Activated CD4-positive, alpha-beta T cell treated with anti-CD3 and anti-CD28 coated beads for 36 hours (primary cell): ENCODE measurements at regions of chr12 and their contacts with region 1.

Region 1: GRCh38 chr12:9750276-9751203 is 10.2 kb downstream of the CD69 start:
- DNase-seq: peak; percentile 72
- ATAC-seq: peak; percentile 62
- H3K4me3 Mint-ChIP-seq: peak overlapping the region; percentile 53
- H3K27ac Mint-ChIP-seq: peak overlapping the region; percentile 51
- H3K4me1 Mint-ChIP-seq: peaks cover 46% of the 10 kb centered on the region
- H3K27me3 Mint-ChIP-seq: no peaks in the 10 kb centered on the region

Region 2: GRCh38 chr12:9782547-9783382 is 32.2 kb after region 1 on chr12:
- CTCF ChIA-PET with region 1: interaction called, 15 read pairs
- POLR2A ChIA-PET with region 1: no interaction called
- intact Hi-C with region 1: no loop called
- DNase-seq: no peak
- ATAC-seq: no peak
- H3K4me3 Mint-ChIP-seq: no peak overlapping the region
- H3K27ac Mint-ChIP-seq: peak overlapping the region; percentile 43
- H3K4me1 Mint-ChIP-seq: peaks cover 56% of the 10 kb centered on the region
- H3K27me3 Mint-ChIP-seq: no peaks in the 10 kb centered on the region

Region 3: DNA sequence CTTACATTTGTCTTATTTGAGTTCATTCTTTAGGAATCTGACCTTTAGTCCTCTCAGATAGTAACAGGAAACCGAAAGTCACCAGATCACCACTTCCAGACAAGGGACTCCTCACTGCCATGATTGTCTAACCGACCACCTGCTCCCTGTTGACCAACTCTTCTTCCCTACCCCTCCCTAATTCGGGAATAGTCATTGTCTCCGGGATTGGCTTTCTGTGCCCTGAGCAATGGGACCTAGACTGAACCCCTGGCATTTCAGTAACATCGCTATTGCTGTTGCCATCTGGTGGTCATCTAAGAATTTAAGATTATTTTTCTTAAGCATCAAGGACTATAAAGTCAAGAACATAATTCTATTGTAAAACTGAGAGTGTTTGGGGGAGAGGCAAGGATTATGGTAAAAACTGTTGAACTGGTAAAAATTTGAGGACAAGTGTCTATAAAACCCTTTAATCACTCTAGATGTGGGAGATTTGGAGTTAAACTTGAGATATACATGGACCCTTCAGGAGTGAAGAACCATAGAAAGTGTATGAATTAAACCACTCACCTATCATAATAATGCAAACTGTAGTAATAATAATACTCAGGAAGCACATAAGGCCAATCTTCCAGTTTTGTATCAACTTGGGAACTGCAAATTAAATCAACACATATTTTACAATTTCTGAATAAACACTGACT is 175.3 kb after region 1 on chr12:
- CTCF ChIA-PET with region 1: interaction called, 19 read pairs
- POLR2A ChIA-PET with region 1: no interaction called
- intact Hi-C with region 1: loop called (anchors 1 kb)
- DNase-seq: peak; percentile 19
- ATAC-seq: peak; percentile 61
- H3K4me3 Mint-ChIP-seq: peak overlapping the region; percentile 10
- H3K27ac Mint-ChIP-seq: peak overlapping the region; percentile 12
- H3K4me1 Mint-ChIP-seq: peaks cover 15% of the 10 kb centered on the region
- H3K27me3 Mint-ChIP-seq: peaks cover 2% of the 10 kb centered on the region

Region 4: GRCh38 chr12:10147714-10148403 is 397.3 kb after region 1 on chr12:
- CTCF ChIA-PET with region 1: interaction called, 5 read pairs
- POLR2A ChIA-PET with region 1: no interaction called
- intact Hi-C with region 1: loop called in 1 of 2 experiments (anchors 2 kb)
- DNase-seq: no peak
- ATAC-seq: peak; percentile 77
- H3K4me3 Mint-ChIP-seq: no peak overlapping the region
- H3K27ac Mint-ChIP-seq: no peak overlapping the region
- H3K4me1 Mint-ChIP-seq: peaks cover 7% of the 10 kb centered on the region
- H3K27me3 Mint-ChIP-seq: no peaks in the 10 kb centered on the region